ENCODE measurements at regions of chr18 and their contacts with region 1.

Region 1: DNA sequence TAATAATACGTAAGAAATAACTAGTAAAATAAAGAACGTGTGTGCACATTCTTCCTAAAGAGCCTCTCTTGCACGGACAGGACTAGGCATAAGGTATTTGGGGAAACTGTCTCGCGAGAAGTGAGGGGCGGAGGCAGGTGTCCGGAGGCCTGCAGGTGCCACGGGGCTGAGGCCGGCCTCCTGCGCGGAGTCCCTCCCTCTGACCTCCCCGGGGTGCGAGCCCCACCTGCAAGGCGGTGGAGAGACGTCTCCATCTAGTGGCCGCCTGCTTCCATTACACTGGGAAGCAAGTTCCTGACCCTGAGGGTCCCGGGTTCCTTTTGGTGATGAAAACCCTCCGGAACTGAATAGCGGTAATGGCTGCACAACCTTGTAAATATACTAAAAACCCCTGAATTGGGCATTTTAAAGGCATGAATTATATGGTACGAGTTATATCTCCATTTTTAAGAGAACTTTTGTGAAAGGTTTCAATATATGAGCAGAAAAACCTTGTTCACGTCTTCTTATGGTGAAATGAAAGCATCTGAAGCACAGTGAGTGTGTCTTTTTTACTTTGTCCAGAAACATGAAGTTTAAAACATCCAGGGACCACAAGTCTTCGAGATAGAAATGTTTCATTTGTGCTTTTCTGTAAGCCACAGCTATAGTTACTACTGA is 35.5 kb upstream of the CTDP1 start:
- DNase-seq: peak; percentile 64
- H3K4me3 ChIP-seq: no peak overlapping the region
- H3K27ac ChIP-seq: no peak overlapping the region
- H3K4me1 ChIP-seq: peaks cover 0 to 4% (median 0%) of the 10 kb centered on the region in 4 donors
- H3K27me3 ChIP-seq: peaks cover 10% of the 10 kb centered on the region
- CTCF ChIP-seq: peak; percentile 86 to 99 (median 94)
- EP300 ChIP-seq: no peak
- POLR2A ChIP-seq: no peak

Region 2: GRCh38 chr18:79538635-79539034 is 105.5 kb before region 1 on chr18:
- in situ Hi-C with region 1: no loop called
- intact Hi-C with region 1: loop called (anchors 5 kb)
- DNase-seq: no peak
- H3K4me3 ChIP-seq: no peak overlapping the region
- H3K27ac ChIP-seq: no peak overlapping the region
- H3K4me1 ChIP-seq: no peaks in the 10 kb centered on the region
- H3K27me3 ChIP-seq: no peaks in the 10 kb centered on the region
- CTCF ChIP-seq: no peak
- EP300 ChIP-seq: no peak
- POLR2A ChIP-seq: no peak

Region 3: GRCh38 chr18:79698668-79699335 is 54.7 kb after region 1 on chr18:
- in situ Hi-C with region 1: no loop called
- intact Hi-C with region 1: no loop called
- DNase-seq: no peak
- H3K4me3 ChIP-seq: no peak overlapping the region
- H3K27ac ChIP-seq: peak overlapping the region; percentile 1 to 63 (median 46)
- H3K4me1 ChIP-seq: peaks cover 0 to 14% (median 9%) of the 10 kb centered on the region in 4 donors
- H3K27me3 ChIP-seq: no peaks in the 10 kb centered on the region
- CTCF ChIP-seq: no peak
- EP300 ChIP-seq: no peak
- POLR2A ChIP-seq: no peak

Measured in transverse colon (tissue), 4 donors.